ENCODE measurements at regions of chr5 and their contacts with region 1.

Region 1: DNA sequence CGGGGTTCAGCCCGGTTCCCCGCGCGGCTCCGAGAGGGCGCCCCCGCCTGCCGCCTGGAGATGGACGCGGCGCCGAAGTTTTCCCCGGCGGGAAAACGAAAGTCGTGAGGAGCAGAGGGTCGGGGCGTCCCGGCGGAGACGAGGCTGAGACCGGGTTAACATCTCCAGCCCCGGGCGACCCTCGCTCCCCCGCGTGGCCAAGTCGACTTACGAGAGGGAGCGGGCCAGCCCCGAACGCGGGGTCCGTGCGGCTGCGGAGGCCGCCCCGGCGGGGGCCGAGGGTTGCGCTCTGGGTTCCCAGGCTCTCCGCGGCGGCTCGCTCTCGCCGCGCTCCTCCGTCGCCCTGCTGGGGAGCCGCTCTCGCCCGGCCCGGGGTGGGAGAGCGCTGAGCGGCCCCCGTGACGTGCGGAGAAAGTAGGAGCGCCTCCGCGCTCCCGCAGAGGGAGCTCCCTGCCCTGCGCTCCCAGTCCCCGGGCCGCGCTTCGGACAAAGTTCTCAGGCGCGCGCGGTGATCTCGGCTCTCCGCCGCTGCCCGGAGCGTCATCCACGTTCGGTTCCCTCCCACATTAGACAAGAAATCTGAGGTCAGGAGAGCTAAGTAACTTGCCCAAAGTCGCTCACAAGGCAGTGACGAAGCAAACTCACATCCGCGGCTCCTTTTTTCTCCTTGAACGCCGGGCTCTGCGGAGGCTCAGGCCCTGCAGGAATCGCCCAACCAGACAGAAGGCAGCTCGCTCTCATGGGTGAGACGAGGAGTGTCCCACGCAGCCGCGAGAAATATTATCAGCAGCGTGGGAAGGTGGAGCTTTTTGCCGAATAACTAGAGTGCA is 1.2 kb upstream of the GCNT4 start:
- DNase-seq: peak; percentile 60 to 66
- H3K4me3 ChIP-seq: peak overlapping the region; percentile 72
- H3K27ac ChIP-seq: 0 out of 2 replicates have a peak overlapping the region, but pooled peaks have one; percentile 9
- H3K4me1 ChIP-seq: peaks cover 20% of the 10 kb centered on the region
- H3K27me3 ChIP-seq: no peaks in the 10 kb centered on the region
- CTCF ChIP-seq: peak; percentile 27; the same call in 1 of the 2 replicates

Region 2: DNA sequence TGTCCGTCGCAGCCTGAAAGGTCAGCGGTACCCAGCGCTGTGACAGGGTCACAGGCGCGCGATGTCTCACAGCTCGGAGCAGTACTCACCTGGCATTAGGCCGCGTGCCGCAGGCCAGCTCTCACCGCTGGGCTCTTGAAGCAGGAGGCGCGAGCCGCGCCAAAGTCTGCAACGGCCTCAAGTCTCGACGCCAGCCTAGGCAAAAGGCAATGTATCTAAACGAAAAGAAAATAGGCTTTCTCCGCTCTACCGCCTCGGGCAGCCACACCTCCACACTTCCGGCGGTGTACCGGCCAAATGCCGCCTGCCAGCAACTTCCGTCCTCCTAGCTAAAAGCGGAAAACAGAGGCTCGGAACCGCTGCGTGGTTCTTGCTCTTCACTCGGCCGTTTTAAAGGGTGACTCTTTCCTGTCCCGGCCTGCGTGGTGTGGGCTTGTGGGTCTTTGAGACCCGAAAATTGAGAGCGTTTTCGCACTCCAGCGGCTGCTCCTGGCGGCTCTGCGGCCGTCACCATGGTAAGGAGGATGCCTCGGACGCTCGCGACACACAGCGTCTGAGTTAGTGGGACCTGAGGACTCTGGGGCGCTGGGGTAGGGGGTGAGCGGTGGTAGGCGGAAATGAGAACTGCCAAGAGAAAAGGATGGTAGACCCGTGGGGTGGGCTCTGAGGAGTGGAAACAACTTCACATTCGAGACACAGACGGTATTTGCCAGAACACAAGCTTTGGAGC is 286.5 kb before region 1 on chr5 and contains the starts of genes GFM2 and NSA2:
- CTCF ChIA-PET with region 1: no interaction called
- POLR2A ChIA-PET with region 1: no interaction called
- intact Hi-C with region 1: loop called (anchors 10 kb)
- DNase-seq: peak; percentile 83 to 88
- H3K4me3 ChIP-seq: peak within 1 kb of the TSS; percentile 83
- H3K27ac ChIP-seq: peak within 1 kb of the TSS; percentile 58
- H3K4me1 ChIP-seq: peaks cover 44% of the 10 kb centered on the region
- H3K27me3 ChIP-seq: no peaks in the 10 kb centered on the region
- CTCF ChIP-seq: no peak; the same call in 1 of the 2 replicates
- total RNA-seq, gene GFM2: 38.5 and 39.8 TPM in 2 replicates
- total RNA-seq, gene NSA2: 47.3 and 87.1 TPM in 2 replicates

Region 3: DNA sequence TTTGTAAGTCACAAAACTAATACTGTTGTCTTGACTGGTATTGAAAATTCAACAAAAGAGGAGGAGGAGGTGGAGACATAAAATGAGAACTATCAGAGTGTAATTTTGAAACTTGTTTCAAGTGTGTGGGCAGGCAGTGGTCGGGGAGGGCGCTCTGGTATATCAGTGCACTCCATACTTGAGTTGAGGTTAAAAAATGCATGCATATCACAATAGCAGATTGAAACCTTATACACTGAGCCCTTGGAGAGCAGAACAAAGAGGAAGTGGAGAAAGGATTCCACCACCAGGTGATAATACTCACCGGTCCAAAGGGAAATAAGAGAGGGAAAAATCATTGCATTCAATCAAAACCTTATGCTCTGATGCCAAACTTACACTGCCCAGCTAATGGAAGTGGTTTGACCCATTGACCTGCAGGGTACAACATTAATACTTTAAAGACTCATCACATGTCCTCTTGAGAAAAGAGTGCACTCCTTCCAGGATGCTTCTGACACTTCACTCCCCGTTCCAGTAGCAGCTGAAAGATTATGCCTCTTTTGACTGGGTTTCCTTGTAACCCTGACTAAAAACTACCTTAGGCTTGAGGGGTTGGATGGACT is 107.9 kb before region 1 on chr5:
- CTCF ChIA-PET with region 1: no interaction called
- POLR2A ChIA-PET with region 1: no interaction called
- intact Hi-C with region 1: loop called (anchors 5 kb)
- DNase-seq: no peak
- H3K4me3 ChIP-seq: no peak overlapping the region
- H3K27ac ChIP-seq: no peak overlapping the region
- H3K4me1 ChIP-seq: peaks cover 15% of the 10 kb centered on the region
- H3K27me3 ChIP-seq: no peaks in the 10 kb centered on the region
- CTCF ChIP-seq: no peak

Region 4: GRCh38 chr5:75236322-75237316 is 183.1 kb after region 1 on chr5 and contains the start of gene ANKRD31:
- CTCF ChIA-PET with region 1: interaction called, 4 read pairs
- POLR2A ChIA-PET with region 1: no interaction called
- intact Hi-C with region 1: loop called (anchors 2 kb)
- DNase-seq: peak; percentile 52 to 84
- H3K4me3 ChIP-seq: peak within 1 kb of the TSS; percentile 94
- H3K27ac ChIP-seq: peak within 1 kb of the TSS; percentile 43
- H3K4me1 ChIP-seq: peaks cover 33% of the 10 kb centered on the region
- H3K27me3 ChIP-seq: no peaks in the 10 kb centered on the region
- CTCF ChIP-seq: no peak; the same call in none of the 2 replicates
- total RNA-seq, gene ANKRD31: 0.23 and 0.48 TPM in 2 replicates

Measured in PC-9 (cell line).